Dendritic cell treated with granulocyte-macrophage colony-stimulating factor and Interleukin-4, amounts not matched to agents 40 ng/mL and 50 ng/mL, for 4 days (primary cell): ENCODE measurements at regions of chr1 and their contacts with region 1.

Region 1: GRCh38 chr1:206808615-206809014 is 36.3 kb upstream of the IL10 start:
- H3K4me3 Mint-ChIP-seq: no peak overlapping the region
- H3K27ac Mint-ChIP-seq: no peak overlapping the region
- H3K4me1 Mint-ChIP-seq: peaks cover 18% of the 10 kb centered on the region
- H3K27me3 Mint-ChIP-seq: peaks cover 1% of the 10 kb centered on the region

Region 2: GRCh38 chr1:206725109-206725963 is 83.3 kb before region 1 on chr1:
- intact Hi-C with region 1: loop called (anchors 2 kb)
- H3K4me3 Mint-ChIP-seq: no peak overlapping the region
- H3K27ac Mint-ChIP-seq: no peak overlapping the region
- H3K4me1 Mint-ChIP-seq: peaks cover 78% of the 10 kb centered on the region
- H3K27me3 Mint-ChIP-seq: no peaks in the 10 kb centered on the region

Region 3: GRCh38 chr1:206734499-206735142 is 74.0 kb before region 1 on chr1:
- intact Hi-C with region 1: loop called (anchors 1 kb)
- H3K4me3 Mint-ChIP-seq: no peak overlapping the region
- H3K27ac Mint-ChIP-seq: no peak overlapping the region
- H3K4me1 Mint-ChIP-seq: peaks cover 82% of the 10 kb centered on the region
- H3K27me3 Mint-ChIP-seq: no peaks in the 10 kb centered on the region

Region 4: GRCh38 chr1:206753141-206753540 is 55.5 kb before region 1 on chr1:
- intact Hi-C with region 1: no loop called
- H3K4me3 Mint-ChIP-seq: no peak overlapping the region
- H3K27ac Mint-ChIP-seq: peak overlapping the region; percentile 45
- H3K4me1 Mint-ChIP-seq: peaks cover 31% of the 10 kb centered on the region
- H3K27me3 Mint-ChIP-seq: peaks cover 2% of the 10 kb centered on the region